ENCODE measurements at regions of chr11 and their contacts with region 1.

Region 1: GRCh38 chr11:8099291-8099899 is 18.4 kb downstream of the TUB start:
- DNase-seq: peak; percentile 60

Region 2: DNA sequence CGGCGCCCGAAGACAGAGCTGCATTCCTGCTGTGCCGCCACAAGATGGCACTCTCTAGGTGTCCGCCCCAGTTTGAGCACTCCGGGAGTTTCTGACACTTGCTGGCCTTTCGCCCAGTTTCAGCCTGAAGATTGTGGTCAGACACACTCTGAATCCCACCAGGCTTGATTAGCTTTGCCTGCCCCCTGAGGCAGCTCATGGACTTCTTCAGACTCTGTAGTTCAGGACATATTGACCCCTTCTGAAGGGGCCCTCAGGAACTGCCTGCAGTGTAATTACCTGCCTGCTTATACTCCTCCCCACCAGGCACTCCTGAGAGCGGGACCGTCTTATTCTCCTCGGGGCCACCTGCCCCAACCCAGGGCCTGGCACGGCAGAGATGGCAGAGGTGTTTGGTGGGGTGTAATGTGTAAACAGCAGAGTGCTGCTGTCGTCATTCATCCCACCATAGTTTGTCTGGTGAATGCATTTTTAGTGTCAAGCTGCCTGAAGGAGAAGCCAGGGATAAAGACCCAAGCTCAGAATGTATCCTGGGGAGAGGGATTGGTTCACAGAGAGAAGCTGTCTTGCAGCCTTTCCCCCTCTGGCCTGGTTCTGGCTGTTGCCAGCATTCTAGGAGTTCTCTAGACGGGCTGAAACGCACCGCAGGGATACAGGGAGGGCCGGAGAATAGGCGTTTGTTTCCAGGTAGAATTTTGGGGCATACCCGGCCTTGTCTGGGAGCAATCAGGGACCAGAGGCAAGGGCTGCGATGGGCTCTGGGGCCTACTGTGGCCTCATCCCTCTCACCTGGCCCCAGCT is 65.9 kb before region 1 on chr11:
- CTCF ChIA-PET with region 1: interaction called, 24 read pairs
- POLR2A ChIA-PET with region 1: interaction called, 3 read pairs
- DNase-seq: peak; percentile 86

Region 3: GRCh38 chr11:8110396-8110795 is 11.0 kb after region 1 on chr11:
- CTCF ChIA-PET with region 1: interaction called, 12 read pairs
- POLR2A ChIA-PET with region 1: no interaction called
- DNase-seq: no peak